ENCODE measurements at regions of chr4 and their contacts with region 1.

Region 1: GRCh38 chr4:113278324-113278934 is 229.0 kb downstream of the ANK2 start:
- DNase-seq: peak; percentile 72
- H3K4me3 Mint-ChIP-seq: no peak overlapping the region
- H3K27ac Mint-ChIP-seq: no peak overlapping the region
- H3K4me1 Mint-ChIP-seq: no peaks in the 10 kb centered on the region
- H3K27me3 Mint-ChIP-seq: peaks cover 8% of the 10 kb centered on the region

Region 2: GRCh38 chr4:112968451-112969159 is 309.8 kb before region 1 on chr4:
- CTCF ChIA-PET with region 1: no interaction called
- POLR2A ChIA-PET with region 1: no interaction called
- intact Hi-C with region 1: no loop called
- DNase-seq: no peak
- H3K4me3 Mint-ChIP-seq: no peak overlapping the region
- H3K27ac Mint-ChIP-seq: no peak overlapping the region
- H3K4me1 Mint-ChIP-seq: no peaks in the 10 kb centered on the region
- H3K27me3 Mint-ChIP-seq: peaks cover 5% of the 10 kb centered on the region

Region 3: GRCh38 chr4:113328514-113328913 is 50.1 kb after region 1 on chr4:
- CTCF ChIA-PET with region 1: interaction called, 7 read pairs
- POLR2A ChIA-PET with region 1: no interaction called
- intact Hi-C with region 1: loop called (anchors 5 kb)
- DNase-seq: peak; percentile 11
- H3K4me3 Mint-ChIP-seq: no peak overlapping the region
- H3K27ac Mint-ChIP-seq: no peak overlapping the region
- H3K4me1 Mint-ChIP-seq: no peaks in the 10 kb centered on the region
- H3K27me3 Mint-ChIP-seq: peaks cover 9% of the 10 kb centered on the region

Region 4: GRCh38 chr4:113355550-113356371 is 77.3 kb after region 1 on chr4:
- CTCF ChIA-PET with region 1: interaction called, 4 read pairs
- POLR2A ChIA-PET with region 1: no interaction called
- intact Hi-C with region 1: loop called (anchors 1 kb)
- DNase-seq: peak; percentile 88
- H3K4me3 Mint-ChIP-seq: peak overlapping the region; percentile 36
- H3K27ac Mint-ChIP-seq: peak overlapping the region; percentile 92
- H3K4me1 Mint-ChIP-seq: peaks cover 39% of the 10 kb centered on the region
- H3K27me3 Mint-ChIP-seq: peaks cover 45% of the 10 kb centered on the region

Region 5: DNA sequence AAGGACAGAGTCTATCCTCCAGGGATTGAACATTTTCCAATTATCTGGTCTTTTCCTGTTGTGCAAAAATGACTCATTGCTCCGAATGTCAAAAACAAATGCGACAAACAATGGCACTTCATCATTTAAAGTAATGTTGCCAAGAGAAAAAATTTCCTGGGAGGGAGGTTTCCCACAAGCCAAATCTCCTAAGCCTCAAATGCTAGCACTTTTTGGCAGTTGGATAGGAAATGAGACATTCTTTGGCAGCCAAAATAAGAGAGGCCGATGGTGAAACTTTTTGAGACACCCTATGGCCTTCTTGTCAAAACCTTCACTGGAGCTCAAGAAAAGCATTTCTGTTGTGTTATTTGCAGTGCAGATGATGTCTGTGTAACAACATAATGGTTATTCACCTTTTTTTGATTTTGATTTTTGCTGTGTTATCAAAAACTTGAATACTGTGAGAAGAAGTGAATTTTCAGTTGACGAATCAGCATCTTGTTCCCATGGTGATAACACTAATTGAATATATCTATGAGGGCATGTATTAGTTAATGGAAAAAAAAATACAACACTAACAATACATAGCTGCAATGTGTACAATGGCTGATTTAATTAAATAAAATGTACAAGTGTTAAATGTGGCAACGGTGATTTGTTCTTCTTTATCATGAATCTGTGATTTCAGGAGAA is 104.8 kb after region 1 on chr4:
- CTCF ChIA-PET with region 1: no interaction called
- POLR2A ChIA-PET with region 1: no interaction called
- intact Hi-C with region 1: loop called (anchors 10 kb)
- DNase-seq: no peak
- H3K4me3 Mint-ChIP-seq: no peak overlapping the region
- H3K27ac Mint-ChIP-seq: no peak overlapping the region
- H3K4me1 Mint-ChIP-seq: peaks cover 15% of the 10 kb centered on the region
- H3K27me3 Mint-ChIP-seq: peaks cover 9% of the 10 kb centered on the region

Region 6: GRCh38 chr4:114077610-114078009 is 799.2 kb after region 1 on chr4:
- CTCF ChIA-PET with region 1: no interaction called
- POLR2A ChIA-PET with region 1: no interaction called
- intact Hi-C with region 1: loop called (anchors 5 kb)
- DNase-seq: no peak
- H3K4me3 Mint-ChIP-seq: no peak overlapping the region
- H3K27ac Mint-ChIP-seq: no peak overlapping the region
- H3K4me1 Mint-ChIP-seq: no peaks in the 10 kb centered on the region
- H3K27me3 Mint-ChIP-seq: no peaks in the 10 kb centered on the region

Region 7: GRCh38 chr4:114386637-114387233 is 1108.3 kb after region 1 on chr4:
- CTCF ChIA-PET with region 1: no interaction called
- POLR2A ChIA-PET with region 1: no interaction called
- intact Hi-C with region 1: loop called (anchors 1 kb)
- DNase-seq: no peak
- H3K4me3 Mint-ChIP-seq: no peak overlapping the region
- H3K27ac Mint-ChIP-seq: no peak overlapping the region
- H3K4me1 Mint-ChIP-seq: no peaks in the 10 kb centered on the region
- H3K27me3 Mint-ChIP-seq: peaks cover 10% of the 10 kb centered on the region

Measured in activated CD4-positive, alpha-beta memory T cell treated with anti-CD3 and anti-CD28 coated beads for 36 hours (primary cell).